Gastrocnemius medialis (tissue), 4 donors: ENCODE measurements at regions of chr15 and their contacts with region 1.

Region 1: DNA sequence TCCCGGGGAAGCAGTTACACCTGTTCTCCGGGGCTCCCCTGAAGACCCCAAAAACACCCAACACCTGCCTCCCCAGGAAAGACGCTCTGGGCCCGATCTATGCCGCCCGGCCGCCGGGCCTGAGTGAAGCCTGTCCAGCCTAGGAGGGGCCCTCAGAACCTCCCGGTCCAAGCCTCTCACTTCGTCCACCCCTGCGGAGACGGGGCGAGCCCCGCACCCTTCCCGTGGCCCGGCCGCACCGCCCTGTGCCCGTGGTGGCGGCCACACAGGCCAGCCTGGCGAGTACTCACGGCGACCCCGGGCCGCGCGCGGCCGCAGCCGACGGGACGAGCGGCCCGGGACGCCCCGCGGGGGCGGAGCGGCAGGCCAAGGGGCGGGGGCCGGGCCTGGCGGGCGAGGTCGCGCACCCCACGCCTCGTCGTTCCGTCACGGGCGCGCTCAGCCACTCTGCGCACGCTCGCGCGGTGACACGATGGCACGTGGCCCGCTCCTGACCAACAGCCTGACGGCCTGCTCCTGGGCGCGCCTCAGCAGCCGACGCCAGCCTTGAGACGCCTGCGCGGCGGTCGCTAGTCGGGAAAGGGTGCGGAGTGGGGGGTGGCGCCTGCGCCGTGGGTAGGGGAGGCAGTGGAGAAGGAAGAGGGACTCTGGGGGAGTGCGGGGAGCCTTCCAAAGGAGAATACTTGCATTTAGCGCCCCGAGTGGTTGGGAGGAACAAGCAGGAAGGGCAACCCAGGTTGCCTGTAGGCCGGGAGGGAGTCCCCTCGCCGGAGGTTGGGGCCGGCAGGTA is at the start of gene PARP6:
- DNase-seq: peak; percentile 97 to 99
- ATAC-seq: peak; percentile 91 to 95
- H3K4me3 ChIP-seq: peak within 1 kb of the TSS; percentile 63 to 98 (median 70)
- H3K27ac ChIP-seq: peak within 1 kb of the TSS; percentile 89 to 97 (median 94)
- H3K4me1 ChIP-seq: peaks cover 26 to 29% of the 10 kb centered on the region in 2 donors
- H3K27me3 ChIP-seq: no peaks in the 10 kb centered on the region
- CTCF ChIP-seq: peak; percentile 66 to 78 (median 70)
- POLR2A ChIP-seq: peak; percentile 82 to 89
- total RNA-seq, gene PARP6: 51.7 to 84.7 (median 66.9) TPM

Region 2: GRCh38 chr15:72117486-72118399 is 154.7 kb before region 1 on chr15 and contains the start of gene MYO9A:
- in situ Hi-C with region 1: no loop called
- intact Hi-C with region 1: loop called (anchors 2 kb)
- DNase-seq: peak; percentile 96 to 97
- ATAC-seq: peak; percentile 80 to 83
- H3K4me3 ChIP-seq: peak within 1 kb of the TSS; percentile 73 to 96 (median 77)
- H3K27ac ChIP-seq: peak within 1 kb of the TSS; percentile 92 to 98 (median 95)
- H3K4me1 ChIP-seq: peaks cover 38 to 47% of the 10 kb centered on the region in 2 donors
- H3K27me3 ChIP-seq: no peaks in the 10 kb centered on the region
- CTCF ChIP-seq: peak in 3 of 5 experiments; percentile 14 to 39 (median 20)
- POLR2A ChIP-seq: peak; percentile 92 to 96
- total RNA-seq, gene MYO9A: 21.0 to 40.9 (median 24.2) TPM

Region 3: DNA sequence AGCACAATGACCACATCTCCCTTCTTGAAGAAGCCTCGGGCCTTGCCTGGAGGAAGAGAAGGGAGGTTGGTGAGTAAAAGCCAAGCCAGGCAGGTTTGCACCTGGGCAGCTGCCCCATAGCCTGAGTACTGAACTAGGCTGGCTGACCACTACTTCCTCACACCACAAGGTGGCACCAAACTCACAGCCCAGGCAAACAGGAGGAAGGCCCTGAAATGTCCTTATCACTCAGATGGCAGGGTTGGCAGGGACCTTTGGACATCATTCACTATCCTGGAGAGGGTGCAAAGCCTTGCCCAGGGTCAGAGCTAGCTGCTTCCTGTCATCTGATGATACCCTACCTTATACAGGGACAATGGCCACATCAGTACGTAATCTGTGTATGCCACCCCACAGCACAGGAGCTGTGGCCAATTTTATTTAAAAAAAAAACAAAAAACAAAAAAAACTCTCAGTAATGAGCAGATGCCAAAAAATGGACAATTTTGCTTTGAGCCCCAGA is 72.6 kb before region 1 on chr15:
- in situ Hi-C with region 1: loop called (anchors 5 to 10 kb)
- intact Hi-C with region 1: loop called (anchors 1 kb)
- DNase-seq: peak; percentile 76 to 90
- ATAC-seq: peak; percentile 45 to 67
- H3K4me3 ChIP-seq: no peak overlapping the region
- H3K27ac ChIP-seq: peak overlapping the region; percentile 82 to 96 (median 92)
- H3K4me1 ChIP-seq: peaks cover 47 to 49% of the 10 kb centered on the region in 2 donors
- H3K27me3 ChIP-seq: no peaks in the 10 kb centered on the region
- CTCF ChIP-seq: peak; percentile 92 to 95 (median 94)
- POLR2A ChIP-seq: no peak

Region 4: GRCh38 chr15:72231066-72231846 is 41.2 kb before region 1 on chr15 and contains the start of gene PKM:
- in situ Hi-C with region 1: loop called in 1 of 4 experiments (anchors 5 kb)
- intact Hi-C with region 1: loop called (anchors 1 kb)
- DNase-seq: peak; percentile 91 to 97
- ATAC-seq: peak; percentile 55 to 70
- H3K4me3 ChIP-seq: peak within 1 kb of the TSS; percentile 68 to 96 (median 80)
- H3K27ac ChIP-seq: peak within 1 kb of the TSS; percentile 96 to 99 (median 98)
- H3K4me1 ChIP-seq: peaks cover 35 to 46% of the 10 kb centered on the region in 2 donors
- H3K27me3 ChIP-seq: no peaks in the 10 kb centered on the region
- CTCF ChIP-seq: peak in 1 of 5 experiments; percentile 46
- POLR2A ChIP-seq: peak; percentile 98
- total RNA-seq, gene PKM: 691 to 946 (median 810) TPM

Region 5: GRCh38 chr15:72237286-72238224 is 34.9 kb before region 1 on chr15:
- in situ Hi-C with region 1: loop called in 1 of 4 experiments (anchors 5 kb)
- intact Hi-C with region 1: no loop called
- DNase-seq: peak; percentile 64 to 83
- ATAC-seq: peak; percentile 90 to 93
- H3K4me3 ChIP-seq: peak overlapping the region in 1 of 4 donors; percentile 27
- H3K27ac ChIP-seq: peak overlapping the region; percentile 47 to 67 (median 58)
- H3K4me1 ChIP-seq: peaks cover 0 to 15% of the 10 kb centered on the region in 2 donors
- H3K27me3 ChIP-seq: no peaks in the 10 kb centered on the region
- CTCF ChIP-seq: no peak
- POLR2A ChIP-seq: peak in 1 of 2 donors; percentile 43

Region 6: DNA sequence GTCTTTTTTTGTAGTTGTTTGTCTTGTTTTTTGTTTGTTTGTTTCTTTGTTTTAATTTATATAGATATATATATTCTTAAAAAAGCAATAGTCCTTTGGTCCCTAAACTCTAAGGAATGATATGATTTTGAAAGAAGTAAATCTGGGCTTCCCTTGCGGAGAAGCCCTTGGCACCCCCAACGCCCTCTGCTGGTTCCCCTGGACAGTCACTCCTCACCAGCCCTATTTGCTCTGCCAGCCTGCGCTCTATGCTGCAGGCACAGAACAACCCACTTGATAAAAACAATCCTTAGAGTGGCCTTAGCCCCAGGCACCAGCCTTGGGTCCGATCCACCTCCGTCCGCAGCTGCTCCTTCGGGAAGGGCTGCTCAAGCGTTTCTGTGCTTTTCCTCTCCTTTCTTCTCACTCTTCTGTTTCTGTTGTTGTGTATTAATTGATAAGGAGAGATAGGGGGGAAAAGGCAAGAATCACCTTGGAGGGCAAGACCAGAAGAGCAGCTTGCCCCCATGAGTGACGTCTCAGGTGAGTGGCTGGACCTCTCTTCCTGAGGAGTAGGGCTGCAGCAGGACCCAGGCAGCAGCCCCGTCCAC is 13.6 kb after region 1 on chr15:
- in situ Hi-C with region 1: no loop called
- intact Hi-C with region 1: no loop called
- DNase-seq: peak; percentile 7 to 37
- ATAC-seq: peak; percentile 60 to 77
- H3K4me3 ChIP-seq: no peak overlapping the region
- H3K27ac ChIP-seq: no peak overlapping the region
- H3K4me1 ChIP-seq: no peaks in the 10 kb centered on the region
- H3K27me3 ChIP-seq: no peaks in the 10 kb centered on the region
- CTCF ChIP-seq: peak; percentile 19 to 73 (median 56)
- POLR2A ChIP-seq: no peak

Region 7: GRCh38 chr15:72375847-72376581 is 103.6 kb after region 1 on chr15 and contains the start of gene HEXA:
- in situ Hi-C with region 1: no loop called
- intact Hi-C with region 1: loop called (anchors 2 kb)
- DNase-seq: peak; percentile 95 to 98
- ATAC-seq: peak; percentile 95 to 96
- H3K4me3 ChIP-seq: peak within 1 kb of the TSS; percentile 79 to 95 (median 89)
- H3K27ac ChIP-seq: peak within 1 kb of the TSS; percentile 91 to 94 (median 93)
- H3K4me1 ChIP-seq: peaks cover 33 to 35% of the 10 kb centered on the region in 2 donors
- H3K27me3 ChIP-seq: no peaks in the 10 kb centered on the region
- CTCF ChIP-seq: peak in 2 of 5 experiments; percentile 35 to 62
- POLR2A ChIP-seq: peak; percentile 73 to 81
- total RNA-seq, gene HEXA: 29.4 to 51.5 (median 40.0) TPM